Ascending aorta (tissue), 2 donors: ENCODE measurements at regions of chr17 and their contacts with region 1.

Region 1: GRCh38 chr17:63919311-63919723 is 678 bp upstream of the GH1 start:
- DNase-seq: peak in 1 of 2 donors; percentile 73
- H3K4me3 ChIP-seq: no peak overlapping the region
- H3K27ac ChIP-seq: no peak overlapping the region
- H3K4me1 ChIP-seq: no peaks in the 10 kb centered on the region
- H3K27me3 ChIP-seq: no peaks in the 10 kb centered on the region
- CTCF ChIP-seq: peak; percentile 87 to 95 (median 91)

Region 2: DNA sequence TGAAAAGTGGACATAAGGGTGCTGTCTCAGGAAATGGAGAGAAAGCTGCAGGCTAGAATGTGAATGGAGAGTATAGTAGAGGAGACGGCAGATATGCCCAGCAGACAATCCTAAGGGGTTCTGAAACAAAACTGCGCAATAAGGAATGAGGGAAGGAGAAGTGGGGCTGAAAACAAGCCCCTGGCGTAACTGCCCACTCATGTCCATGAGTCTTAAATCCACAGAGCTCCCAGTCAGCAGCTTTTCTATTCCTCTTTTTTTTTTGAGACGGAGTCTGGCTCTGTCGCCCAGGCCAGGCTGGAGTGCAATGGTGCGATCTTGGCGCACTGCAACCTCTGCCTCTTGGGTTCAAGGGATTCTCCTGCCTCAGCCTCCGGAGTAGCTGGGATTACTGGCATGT is 183.6 kb before region 1 on chr17:
- intact Hi-C with region 1: no loop called
- DNase-seq: no peak
- H3K4me3 ChIP-seq: no peak overlapping the region
- H3K27ac ChIP-seq: no peak overlapping the region
- H3K4me1 ChIP-seq: peaks cover 0 to 6% of the 10 kb centered on the region in 2 donors
- H3K27me3 ChIP-seq: no peaks in the 10 kb centered on the region
- CTCF ChIP-seq: no peak

Region 3: DNA sequence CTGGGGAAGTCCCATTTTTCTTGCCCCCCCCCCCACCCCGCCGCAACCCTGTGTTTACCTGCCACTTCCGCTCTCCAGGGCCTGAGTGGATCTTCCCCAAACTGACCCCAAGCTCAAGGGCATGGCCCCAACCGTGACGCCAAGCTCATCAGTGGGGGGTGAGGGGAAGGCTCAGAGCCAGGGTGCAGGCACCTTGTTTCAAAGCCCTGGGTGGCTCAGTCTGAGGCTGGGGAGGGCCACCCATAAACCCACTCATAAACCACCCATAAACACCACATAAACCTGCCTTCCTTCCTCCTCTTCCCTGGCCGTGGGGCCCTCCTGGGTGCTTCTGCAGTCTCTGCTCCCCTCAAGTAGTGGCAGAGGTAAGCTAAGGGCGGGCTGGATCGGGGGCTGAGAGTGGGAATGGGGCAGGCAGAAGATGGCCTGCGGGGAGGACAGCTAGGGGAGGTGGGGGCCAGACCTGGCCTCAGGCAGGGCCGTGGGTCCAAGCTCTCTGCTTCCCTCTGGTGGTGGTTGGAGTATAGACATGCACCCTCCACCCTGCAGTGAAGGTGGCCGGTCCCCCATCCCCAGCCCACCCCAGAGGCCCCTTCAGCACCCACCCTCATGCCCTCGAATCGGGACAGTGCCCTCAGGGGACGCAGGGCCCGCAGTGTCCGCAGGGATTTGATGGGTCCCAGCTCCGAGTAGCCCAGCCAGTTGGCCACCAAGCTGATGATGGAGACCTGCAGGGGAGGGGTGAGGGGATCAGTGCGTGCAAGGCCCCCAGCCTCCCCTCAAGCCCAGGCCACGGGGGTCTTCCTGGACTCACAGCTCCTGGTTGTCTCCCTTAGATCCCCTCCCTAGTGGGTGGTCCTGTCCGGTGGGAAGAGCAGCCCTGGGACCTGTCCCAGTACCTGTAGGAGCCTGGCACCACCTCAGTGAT is 27.4 kb after region 1 on chr17:
- intact Hi-C with region 1: no loop called
- DNase-seq: no peak
- H3K4me3 ChIP-seq: no peak overlapping the region
- H3K27ac ChIP-seq: no peak overlapping the region
- H3K4me1 ChIP-seq: no peaks in the 10 kb centered on the region
- H3K27me3 ChIP-seq: no peaks in the 10 kb centered on the region
- CTCF ChIP-seq: peak; percentile 31 to 59 (median 55)

Region 4: GRCh38 chr17:63974594-63975192 is 55.4 kb after region 1 on chr17:
- intact Hi-C with region 1: no loop called
- DNase-seq: no peak
- H3K4me3 ChIP-seq: no peak overlapping the region
- H3K27ac ChIP-seq: no peak overlapping the region
- H3K4me1 ChIP-seq: no peaks in the 10 kb centered on the region
- H3K27me3 ChIP-seq: no peaks in the 10 kb centered on the region
- CTCF ChIP-seq: no peak

Region 5: DNA sequence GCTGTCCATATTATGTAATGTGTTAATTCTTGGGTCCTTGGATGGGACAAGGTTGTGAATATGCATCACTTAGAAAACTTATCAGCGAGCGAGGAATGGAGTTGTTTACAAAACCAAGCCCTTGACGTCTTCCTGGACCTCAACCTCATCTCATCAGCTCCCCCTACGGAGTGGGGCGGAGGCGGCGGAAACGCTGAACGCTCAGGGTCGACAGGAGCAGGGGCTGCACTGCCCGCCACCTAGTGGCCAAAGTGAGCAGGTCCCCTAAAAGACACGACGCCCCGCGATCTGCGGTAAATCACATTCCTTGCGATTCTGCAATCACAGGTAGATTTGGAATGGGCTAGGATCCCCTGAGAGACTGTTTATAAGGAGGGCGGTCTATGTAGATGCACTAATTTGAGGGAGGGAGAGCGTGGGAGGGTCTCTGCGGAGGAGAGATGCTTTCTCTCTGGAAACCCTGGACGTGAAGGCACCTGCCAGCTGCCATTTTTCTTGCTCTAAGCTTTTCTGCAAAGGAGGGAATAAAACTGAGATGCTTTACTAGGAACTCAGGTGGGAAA is 106.5 kb after region 1 on chr17:
- intact Hi-C with region 1: loop called (anchors 2 kb)
- DNase-seq: peak; percentile 46 to 87
- H3K4me3 ChIP-seq: peak overlapping the region; percentile 29 to 33
- H3K27ac ChIP-seq: no peak overlapping the region
- H3K4me1 ChIP-seq: peaks cover 0 to 3% of the 10 kb centered on the region in 2 donors
- H3K27me3 ChIP-seq: no peaks in the 10 kb centered on the region
- CTCF ChIP-seq: peak; percentile 88 to 95 (median 91)